ENCODE measurements at regions of chr7 and their contacts with region 1.

Region 1: GRCh38 chr7:128796327-128796726 is 4.6 kb downstream of the CCDC136 start:
- DNase-seq: no peak
- H3K4me3 ChIP-seq: no peak overlapping the region
- H3K27ac ChIP-seq: no peak overlapping the region
- H3K4me1 ChIP-seq: no peaks in the 10 kb centered on the region
- H3K27me3 ChIP-seq: no peaks in the 10 kb centered on the region
- CTCF ChIP-seq: no peak
- POLR2A ChIP-seq: no peak

Region 2: GRCh38 chr7:128812514-128813168 is 16.3 kb after region 1 on chr7:
- intact Hi-C with region 1: no loop called
- DNase-seq: no peak
- H3K4me3 ChIP-seq: no peak overlapping the region
- H3K27ac ChIP-seq: no peak overlapping the region
- H3K4me1 ChIP-seq: no peaks in the 10 kb centered on the region
- H3K27me3 ChIP-seq: no peaks in the 10 kb centered on the region
- CTCF ChIP-seq: no peak
- POLR2A ChIP-seq: no peak

Region 3: GRCh38 chr7:128874140-128875031 is 78.1 kb after region 1 on chr7:
- intact Hi-C with region 1: loop called (anchors 2 kb)
- DNase-seq: no peak
- H3K4me3 ChIP-seq: no peak overlapping the region
- H3K27ac ChIP-seq: no peak overlapping the region
- H3K4me1 ChIP-seq: no peaks in the 10 kb centered on the region
- H3K27me3 ChIP-seq: no peaks in the 10 kb centered on the region
- CTCF ChIP-seq: no peak
- POLR2A ChIP-seq: no peak

Region 4: DNA sequence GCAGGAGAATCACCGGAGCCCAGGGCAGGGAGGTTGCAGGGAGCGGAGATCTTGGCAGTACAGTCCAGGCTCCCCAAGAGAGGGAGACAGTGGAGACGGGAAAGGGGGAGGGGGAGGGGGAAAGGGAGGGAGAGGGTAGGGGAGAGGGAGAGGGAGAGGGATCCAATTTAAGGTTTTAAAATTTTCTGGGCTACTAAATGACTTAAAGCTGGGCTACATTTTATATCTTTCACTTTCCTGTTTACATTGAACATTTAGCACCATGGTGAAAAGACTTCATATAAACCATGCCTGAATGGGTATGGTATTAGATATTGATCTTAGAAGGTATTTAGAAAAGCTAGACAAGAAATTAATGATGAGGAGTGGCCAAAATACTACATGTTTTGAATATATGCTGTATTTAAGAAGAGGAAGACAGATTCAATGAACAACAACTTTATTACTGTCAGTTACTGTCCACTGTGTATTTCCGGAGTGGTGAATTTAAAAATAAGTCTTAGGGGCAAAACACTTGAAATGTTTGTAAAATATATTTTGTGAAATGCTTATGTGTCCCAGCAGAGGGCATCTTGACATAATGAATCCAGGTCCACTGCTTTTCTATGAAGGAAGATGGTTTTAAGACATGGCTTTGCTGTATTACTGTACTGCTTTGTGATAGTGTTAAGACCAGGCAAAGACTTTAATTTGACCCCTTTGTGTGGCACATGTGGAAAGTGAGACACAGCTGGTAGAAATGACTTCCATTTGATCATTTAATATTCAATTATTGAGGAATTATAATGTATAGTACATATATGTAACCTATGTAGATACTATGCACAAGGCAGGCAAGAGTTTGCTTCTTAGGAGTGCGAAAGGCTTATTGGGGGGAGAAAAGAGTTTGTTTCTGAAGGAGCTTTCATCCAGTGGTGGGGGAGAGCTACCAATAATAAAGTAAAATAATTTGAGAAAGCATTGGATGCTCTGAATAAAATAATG is 868.0 kb after region 1 on chr7:
- intact Hi-C with region 1: loop called (anchors 5 kb)
- DNase-seq: no peak
- H3K4me3 ChIP-seq: no peak overlapping the region
- H3K27ac ChIP-seq: no peak overlapping the region
- H3K4me1 ChIP-seq: no peaks in the 10 kb centered on the region
- H3K27me3 ChIP-seq: no peaks in the 10 kb centered on the region
- CTCF ChIP-seq: peak; percentile 10 to 54 (median 27)
- POLR2A ChIP-seq: no peak

Measured in breast epithelium (tissue), 4 donors.